MCF 10A (cell line): ENCODE measurements at regions of chr16 and their contacts with region 1.

Region 1: DNA sequence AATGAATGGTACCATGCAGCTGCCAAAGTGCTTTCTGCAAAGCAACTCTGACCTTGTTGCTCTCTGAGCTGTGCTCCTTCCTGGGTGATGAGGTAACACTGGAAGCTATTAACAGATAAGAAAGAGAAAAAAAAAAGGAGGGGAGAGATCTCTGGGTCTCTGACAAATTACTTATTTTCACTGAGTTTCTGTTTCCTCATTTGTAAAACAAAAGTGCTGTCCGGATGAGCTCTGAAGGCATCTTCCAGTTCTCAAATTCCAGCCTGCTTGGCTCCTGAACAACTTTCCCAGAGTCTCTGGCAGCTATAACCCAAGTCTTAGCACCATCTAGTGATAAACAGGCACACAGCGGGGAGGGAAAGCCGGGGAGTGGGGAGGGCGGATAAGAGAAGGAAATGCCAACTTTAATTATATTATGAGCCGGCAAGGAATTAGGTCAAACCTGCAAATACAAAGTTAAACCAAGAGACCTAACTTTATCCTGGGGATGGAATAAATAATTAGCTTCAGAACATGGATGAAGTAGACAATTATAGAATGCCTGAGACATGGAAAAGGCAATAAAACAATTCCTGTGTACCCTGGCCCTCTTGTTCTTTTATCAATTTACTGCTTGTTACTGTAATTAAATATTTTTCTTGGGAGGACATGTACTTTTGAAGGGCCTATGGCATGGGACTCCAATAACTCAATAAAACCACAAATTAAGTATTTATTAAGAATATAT is 61.3 kb upstream of the KIFC3 start:
- DNase-seq: peak; percentile 81
- H3K4me3 Mint-ChIP-seq: no peak overlapping the region
- H3K27ac Mint-ChIP-seq: no peak overlapping the region
- H3K4me1 Mint-ChIP-seq: peaks cover 7% of the 10 kb centered on the region
- H3K27me3 Mint-ChIP-seq: no peaks in the 10 kb centered on the region
- CTCF ChIP-seq: peak; percentile 63

Region 2: DNA sequence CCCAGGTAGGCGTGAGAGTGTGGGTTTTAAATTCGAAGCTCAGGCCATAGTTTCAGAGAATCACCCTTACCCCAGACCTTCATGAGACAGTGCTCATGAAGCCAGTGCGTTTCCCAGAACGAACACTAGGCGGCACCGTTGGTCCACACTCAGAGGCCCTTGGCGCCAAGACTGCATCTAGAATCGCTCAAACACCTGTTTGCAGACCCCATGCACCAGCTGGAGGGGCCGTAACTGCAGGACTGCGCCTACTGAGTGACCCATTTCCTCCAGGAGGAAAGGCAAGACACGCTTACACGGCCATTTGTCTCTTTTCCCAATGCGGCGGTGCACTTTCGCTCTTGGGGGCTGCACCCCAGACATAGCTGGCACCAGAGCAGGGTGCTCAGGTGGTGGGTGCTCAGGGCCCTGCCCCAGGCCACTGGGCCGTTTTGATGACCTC is 287.1 kb before region 1 on chr16:
- CTCF ChIA-PET with region 1: interaction called, 17 read pairs
- POLR2A ChIA-PET with region 1: no interaction called
- intact Hi-C with region 1: loop called (anchors 1 kb)
- DNase-seq: peak; percentile 73
- H3K4me3 Mint-ChIP-seq: no peak overlapping the region
- H3K27ac Mint-ChIP-seq: no peak overlapping the region
- H3K4me1 Mint-ChIP-seq: no peaks in the 10 kb centered on the region
- H3K27me3 Mint-ChIP-seq: peaks cover 23% of the 10 kb centered on the region
- CTCF ChIP-seq: peak; percentile 97

Region 3: GRCh38 chr16:57734925-57735754 is 128.5 kb before region 1 on chr16:
- CTCF ChIA-PET with region 1: interaction called, 21 read pairs
- POLR2A ChIA-PET with region 1: no interaction called
- intact Hi-C with region 1: no loop called
- DNase-seq: peak; percentile 100
- H3K4me3 Mint-ChIP-seq: peak overlapping the region; percentile 93
- H3K27ac Mint-ChIP-seq: peak overlapping the region; percentile 96
- H3K4me1 Mint-ChIP-seq: peaks cover 23% of the 10 kb centered on the region
- H3K27me3 Mint-ChIP-seq: no peaks in the 10 kb centered on the region
- CTCF ChIP-seq: no peak

Region 4: DNA sequence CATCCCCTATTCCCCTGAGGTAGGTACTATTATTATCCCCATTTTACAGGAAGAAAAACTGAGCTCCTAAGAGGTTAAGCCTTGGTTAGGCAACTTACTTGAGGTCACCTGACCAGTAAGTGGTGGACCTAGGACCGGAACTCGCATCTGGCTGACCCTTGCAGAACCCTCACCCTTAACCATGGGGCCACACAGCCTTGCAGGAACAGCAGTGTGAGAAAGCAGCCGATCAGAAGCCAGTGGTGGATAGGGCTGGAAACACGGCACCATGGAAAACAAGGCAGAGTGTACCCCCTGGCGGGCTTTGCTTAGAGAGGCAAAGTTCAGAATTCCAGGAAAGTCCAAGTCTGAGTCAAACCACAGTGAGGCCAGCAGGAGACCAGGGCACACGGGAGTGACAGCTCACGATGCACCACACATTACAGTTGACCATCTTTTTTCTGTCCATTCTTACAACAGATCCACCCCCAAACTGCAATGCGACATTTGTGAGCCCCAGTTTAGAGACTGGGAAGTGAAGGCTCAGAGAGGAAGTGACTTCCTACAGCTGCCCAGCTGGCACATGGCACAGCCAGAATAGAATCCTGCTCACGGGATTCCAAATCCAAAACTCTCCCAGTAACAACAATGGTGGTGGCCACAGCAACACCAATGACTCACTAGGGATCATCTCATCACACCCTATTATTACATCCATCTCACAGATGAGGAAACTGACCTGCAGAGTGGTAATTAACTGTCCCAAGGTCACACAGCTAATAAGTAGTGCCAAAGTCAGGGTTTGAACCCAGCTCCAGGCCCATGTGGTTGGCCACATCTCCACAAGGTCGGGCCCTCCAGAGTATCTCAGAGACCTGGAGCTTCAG is 81.6 kb before region 1 on chr16:
- CTCF ChIA-PET with region 1: interaction called, 19 read pairs
- POLR2A ChIA-PET with region 1: no interaction called
- intact Hi-C with region 1: no loop called
- DNase-seq: peak; percentile 47
- H3K4me3 Mint-ChIP-seq: no peak overlapping the region
- H3K27ac Mint-ChIP-seq: no peak overlapping the region
- H3K4me1 Mint-ChIP-seq: peaks cover 23% of the 10 kb centered on the region
- H3K27me3 Mint-ChIP-seq: no peaks in the 10 kb centered on the region
- CTCF ChIP-seq: no peak

Region 5: GRCh38 chr16:57802341-57803133 is 61.1 kb before region 1 on chr16 and contains the start of gene KIFC3:
- CTCF ChIA-PET with region 1: interaction called, 176 read pairs
- POLR2A ChIA-PET with region 1: interaction called, 5 read pairs
- intact Hi-C with region 1: loop called (anchors 1 kb)
- DNase-seq: peak; percentile 67
- H3K4me3 Mint-ChIP-seq: peak within 1 kb of the TSS; percentile 76
- H3K27ac Mint-ChIP-seq: peak within 1 kb of the TSS; percentile 97
- H3K4me1 Mint-ChIP-seq: peaks cover 55% of the 10 kb centered on the region
- H3K27me3 Mint-ChIP-seq: no peaks in the 10 kb centered on the region
- CTCF ChIP-seq: peak; percentile 15
- total RNA-seq, gene KIFC3: 97.1 and 120 TPM in 2 replicates

Region 6: DNA sequence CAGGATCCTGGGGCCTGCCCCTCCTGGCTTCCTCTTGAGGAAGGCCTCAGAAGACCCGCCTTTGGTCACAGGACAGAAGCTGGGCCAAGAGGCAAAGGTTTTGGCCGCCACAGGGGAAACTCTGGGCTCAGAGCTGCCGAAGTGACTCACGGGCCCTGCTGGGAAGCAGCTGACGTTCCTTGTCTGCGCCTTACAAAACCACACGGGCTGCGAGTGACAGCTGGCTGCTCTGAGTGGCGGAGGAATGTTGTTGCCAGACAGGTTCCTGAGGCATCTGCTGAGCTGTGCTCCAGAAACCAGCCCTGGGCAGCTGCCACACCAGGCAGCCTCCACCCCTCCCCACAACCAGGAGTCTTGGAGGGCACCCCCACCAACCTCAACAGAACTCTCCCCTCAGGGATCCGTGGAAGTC is 47.3 kb before region 1 on chr16:
- CTCF ChIA-PET with region 1: interaction called, 15 read pairs
- POLR2A ChIA-PET with region 1: no interaction called
- intact Hi-C with region 1: no loop called
- DNase-seq: peak; percentile 94
- H3K4me3 Mint-ChIP-seq: no peak overlapping the region
- H3K27ac Mint-ChIP-seq: peak overlapping the region; percentile 87
- H3K4me1 Mint-ChIP-seq: peaks cover 18% of the 10 kb centered on the region
- H3K27me3 Mint-ChIP-seq: no peaks in the 10 kb centered on the region
- CTCF ChIP-seq: no peak

Region 7: DNA sequence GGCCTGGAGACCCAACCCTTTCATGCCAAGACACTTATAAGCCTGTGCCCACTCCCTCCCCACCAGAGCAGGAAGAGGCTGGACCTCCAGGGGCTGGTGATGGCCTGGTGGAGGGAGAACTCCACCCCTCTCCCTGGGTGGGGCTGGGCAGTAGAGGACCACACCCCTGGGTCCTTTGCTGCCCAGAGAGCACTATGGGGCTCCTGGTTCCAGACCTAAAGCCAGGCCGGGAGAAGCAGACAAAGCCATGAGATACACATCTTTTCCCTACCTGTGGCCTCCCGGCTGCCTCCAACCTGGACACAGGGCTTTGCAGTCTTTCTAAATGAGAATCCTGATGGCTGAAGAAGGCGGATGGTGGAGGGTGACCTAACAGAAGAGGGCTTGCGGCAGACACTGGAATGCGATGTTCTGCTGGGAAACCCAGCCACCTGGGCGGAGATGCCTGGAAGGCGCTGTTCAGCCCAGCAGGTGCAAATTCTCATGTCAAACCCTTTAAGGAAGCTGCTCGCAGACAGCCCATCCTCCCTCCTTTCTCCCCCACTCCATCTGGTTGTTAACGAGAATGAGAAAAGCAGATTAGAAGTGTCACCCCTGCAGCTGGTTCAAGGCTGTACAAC is 17.4 kb before region 1 on chr16:
- CTCF ChIA-PET with region 1: interaction called, 19 read pairs
- POLR2A ChIA-PET with region 1: interaction called, 3 read pairs
- intact Hi-C with region 1: no loop called
- DNase-seq: no peak
- H3K4me3 Mint-ChIP-seq: no peak overlapping the region
- H3K27ac Mint-ChIP-seq: no peak overlapping the region
- H3K4me1 Mint-ChIP-seq: peaks cover 5% of the 10 kb centered on the region
- H3K27me3 Mint-ChIP-seq: no peaks in the 10 kb centered on the region
- CTCF ChIP-seq: no peak